ENCODE measurements at regions of chr14 and their contacts with region 1.

Region 1: DNA sequence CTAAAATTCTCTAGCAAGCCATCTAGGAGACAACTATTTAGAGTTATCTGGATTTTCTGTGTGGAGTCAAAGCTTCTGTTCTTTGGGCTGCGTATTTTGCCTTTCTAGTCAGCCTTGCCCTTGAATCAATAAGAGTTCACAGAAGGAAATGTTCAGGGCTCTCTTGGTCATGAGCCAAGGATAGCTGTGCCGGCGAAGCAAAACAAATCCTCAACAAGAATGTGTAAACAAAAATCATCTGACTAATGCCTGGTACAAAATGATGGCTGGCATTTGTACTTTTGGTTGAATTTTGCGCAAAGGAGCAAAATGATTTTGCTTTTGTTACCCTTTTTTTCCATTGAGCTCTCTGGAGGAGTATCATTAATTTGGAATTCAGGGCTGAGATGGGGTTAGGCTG is 171.1 kb downstream of the DACT1 start:
- DNase-seq: no peak
- ATAC-seq: no peak
- H3K4me3 ChIP-seq: no peak overlapping the region
- H3K27ac ChIP-seq: no peak overlapping the region
- H3K4me1 ChIP-seq: peaks cover 0 to 12% (median 0%) of the 10 kb centered on the region in 9 donors
- H3K27me3 ChIP-seq: no peaks in the 10 kb centered on the region
- CTCF ChIP-seq: no peak

Region 2: DNA sequence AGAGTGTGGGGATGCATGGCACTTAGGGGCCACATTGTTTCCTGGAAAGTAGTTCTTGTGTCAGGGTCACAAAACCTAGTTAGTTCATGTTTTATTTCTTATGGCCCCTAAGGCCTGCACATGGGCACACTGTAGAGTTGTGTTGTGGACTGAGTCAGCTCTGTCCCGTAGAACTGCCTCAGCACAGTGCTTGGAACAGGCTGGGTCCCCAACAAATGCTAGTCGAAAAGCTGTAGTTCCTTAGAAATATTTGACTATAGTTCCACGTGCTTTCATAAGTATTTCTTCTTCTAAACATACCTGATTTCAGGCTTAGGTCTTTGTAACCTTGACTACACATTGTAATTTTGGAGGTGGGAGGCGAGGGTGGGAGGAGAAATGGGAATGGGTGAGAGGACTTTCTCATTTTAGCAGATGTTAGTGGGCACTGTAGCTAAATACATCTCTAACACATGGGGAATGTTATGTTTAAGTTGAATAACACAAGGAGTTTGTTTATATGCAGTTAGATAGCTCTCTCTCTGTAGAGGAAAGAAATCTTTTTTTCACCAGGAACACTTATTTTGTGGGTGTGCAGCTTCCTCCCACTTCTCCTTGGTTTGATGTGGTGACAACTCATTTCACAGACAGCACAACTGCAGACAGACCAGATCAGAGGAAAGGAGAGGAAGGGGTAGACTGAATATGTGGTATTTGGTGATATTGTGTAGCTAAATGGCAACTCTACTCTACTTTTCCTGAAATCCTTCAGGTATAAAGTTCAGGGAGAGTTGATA is 210.6 kb before region 1 on chr14:
- intact Hi-C with region 1: no loop called
- DNase-seq: no peak
- ATAC-seq: no peak
- H3K4me3 ChIP-seq: no peak overlapping the region
- H3K27ac ChIP-seq: no peak overlapping the region
- H3K4me1 ChIP-seq: no peaks in the 10 kb centered on the region
- H3K27me3 ChIP-seq: no peaks in the 10 kb centered on the region
- CTCF ChIP-seq: no peak

Region 3: DNA sequence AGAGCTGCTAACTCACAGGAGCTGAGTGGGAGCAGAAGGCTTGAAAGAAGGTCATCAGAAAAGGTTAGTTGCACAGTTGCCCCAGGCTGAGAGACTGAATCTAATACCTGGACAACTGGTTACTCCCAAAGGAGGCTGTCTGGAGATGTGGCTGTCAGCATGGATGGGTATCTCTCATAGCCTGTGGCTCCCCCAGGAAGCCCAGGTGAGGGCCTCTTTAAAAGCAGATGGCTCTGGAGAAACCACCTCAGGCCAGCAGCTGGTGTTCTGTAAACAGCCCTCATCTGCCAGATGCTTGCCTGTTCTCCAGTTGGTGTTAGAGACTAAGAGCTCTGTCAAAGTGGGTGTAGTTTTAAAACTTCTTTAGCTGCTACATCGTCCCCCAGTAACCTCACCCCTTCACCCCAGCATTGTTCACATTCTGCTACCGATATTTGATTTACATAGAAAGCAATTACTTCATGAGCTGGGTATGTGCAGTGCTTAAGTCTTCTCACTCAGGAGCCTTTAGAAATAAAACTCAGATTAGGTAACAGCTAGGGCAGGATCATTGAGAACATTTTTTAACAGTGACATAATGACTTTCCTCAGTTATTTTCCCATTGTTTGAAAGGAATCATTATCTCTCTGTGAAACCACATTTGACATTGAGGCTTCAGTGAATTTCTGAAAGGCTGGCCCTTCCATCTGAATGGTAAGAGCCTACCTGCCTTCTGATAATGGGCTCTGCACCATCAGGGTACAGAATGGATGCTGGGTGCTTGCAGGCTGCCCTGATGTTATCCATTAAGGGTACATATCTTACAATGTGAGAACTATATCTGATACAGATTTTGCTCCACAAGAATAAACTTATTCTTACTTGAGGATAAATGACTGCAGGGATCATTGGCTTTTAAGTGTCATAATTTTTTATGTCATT is 145.1 kb before region 1 on chr14:
- intact Hi-C with region 1: loop called in 1 of 10 experiments (anchors 10 kb)
- DNase-seq: no peak
- ATAC-seq: peak in 3 of 8 donors; percentile 9 to 37 (median 33)
- H3K4me3 ChIP-seq: no peak overlapping the region
- H3K27ac ChIP-seq: no peak overlapping the region
- H3K4me1 ChIP-seq: peaks cover 0 to 26% (median 6%) of the 10 kb centered on the region in 9 donors
- H3K27me3 ChIP-seq: no peaks in the 10 kb centered on the region
- CTCF ChIP-seq: no peak

Region 4: DNA sequence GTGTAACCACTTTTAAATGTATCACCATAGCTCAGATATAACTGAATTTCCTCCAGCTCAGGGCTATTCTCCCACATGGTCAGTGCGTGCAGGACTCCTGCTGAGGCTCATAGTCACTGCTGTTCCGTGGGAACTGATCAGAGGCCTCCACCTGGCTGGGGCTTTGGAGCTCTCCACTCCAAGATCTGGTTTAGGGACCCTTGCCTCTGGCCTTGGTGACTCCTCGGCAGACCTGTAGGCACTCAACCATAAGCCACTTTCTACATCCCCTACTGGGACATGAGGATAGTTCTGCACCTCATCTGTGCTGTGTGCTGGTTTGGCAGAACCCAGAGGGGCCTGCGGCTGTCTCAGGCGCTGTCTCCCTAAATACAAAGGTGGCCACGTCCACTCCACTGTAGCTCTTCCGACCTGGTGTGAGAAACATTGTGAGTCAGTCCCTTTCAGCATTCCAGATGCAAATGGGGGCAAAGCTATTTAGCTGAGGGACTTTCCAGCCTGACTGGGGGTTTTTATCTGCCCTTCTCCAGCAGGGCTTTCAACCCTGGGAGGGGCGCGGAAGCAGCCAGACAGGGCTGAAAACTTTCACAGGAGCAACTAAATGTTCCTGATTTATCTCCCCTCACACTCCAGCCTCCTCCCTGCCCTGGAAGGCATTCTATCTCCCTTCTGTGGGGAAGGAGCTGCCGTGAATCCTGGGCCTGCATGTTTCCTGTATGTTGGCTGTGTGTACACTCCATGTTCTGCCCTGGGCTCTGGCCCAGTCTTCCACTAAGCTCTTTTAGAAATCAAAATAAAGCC is 161.3 kb after region 1 on chr14:
- intact Hi-C with region 1: loop called in 1 of 10 experiments (anchors 10 kb)
- DNase-seq: no peak
- ATAC-seq: peak in 2 of 8 donors; percentile 20 to 44
- H3K4me3 ChIP-seq: no peak overlapping the region
- H3K27ac ChIP-seq: peak overlapping the region in 3 of 10 donors; percentile 4 to 27 (median 7)
- H3K4me1 ChIP-seq: peaks cover 0 to 15% (median 6%) of the 10 kb centered on the region in 9 donors
- H3K27me3 ChIP-seq: no peaks in the 10 kb centered on the region
- CTCF ChIP-seq: no peak